Activated B cell treated with CpG ODN at 0.5 μM for 24 hours (primary cell): ENCODE measurements at regions of chr11 and their contacts with region 1.

Region 1: DNA sequence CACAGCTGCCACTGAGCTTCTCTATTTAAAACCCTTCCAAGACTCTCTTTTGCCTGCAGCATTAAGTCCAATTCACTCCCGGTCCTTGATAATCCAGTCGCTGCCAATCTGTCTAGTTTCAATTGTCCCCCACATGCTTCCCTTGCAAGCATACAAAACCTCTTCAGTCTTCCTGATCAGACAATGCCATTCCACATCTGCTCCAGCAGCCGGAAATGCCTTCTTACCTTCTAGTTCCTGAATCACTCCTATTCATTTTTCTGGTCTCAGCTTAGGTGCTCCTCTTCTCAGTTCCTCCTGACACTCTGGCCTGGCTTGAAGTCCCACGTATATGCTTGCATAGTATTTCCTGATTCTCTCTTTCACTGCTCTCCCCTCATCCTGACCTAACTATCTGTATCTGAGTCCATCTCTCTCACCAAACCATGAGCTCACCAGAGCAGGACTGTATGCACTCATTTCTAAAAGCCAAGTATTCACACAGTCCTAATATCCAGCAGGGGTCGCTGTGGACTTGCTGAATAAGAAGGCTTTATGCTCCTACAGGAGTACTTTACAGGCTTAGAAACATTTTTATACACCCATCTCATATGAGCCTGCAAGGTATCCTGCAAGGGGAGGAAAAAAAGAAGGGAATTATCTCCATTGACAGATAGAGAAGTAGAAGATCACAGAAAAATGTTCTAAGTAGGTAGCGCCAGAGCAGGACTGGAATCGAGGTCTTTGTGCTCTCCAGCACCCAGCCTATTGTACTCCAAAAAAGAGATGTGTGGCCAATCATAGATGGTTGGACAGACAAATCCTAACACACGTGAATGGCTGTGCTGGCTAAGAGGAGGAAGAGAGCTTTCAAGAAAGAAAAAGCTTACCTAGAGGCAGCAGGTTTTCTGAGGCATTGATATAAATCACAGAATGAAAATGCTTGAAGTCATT is 19.2 kb downstream of the XRRA1 start:
- DNase-seq: no peak
- ATAC-seq: peak; percentile 72
- H3K4me3 Mint-ChIP-seq: no peak overlapping the region
- H3K27ac Mint-ChIP-seq: no peak overlapping the region
- H3K4me1 Mint-ChIP-seq: no peaks in the 10 kb centered on the region
- H3K27me3 Mint-ChIP-seq: no peaks in the 10 kb centered on the region
- CTCF ChIP-seq: peak; percentile 65

Region 2: GRCh38 chr11:74543991-74544390 is 385.7 kb before region 1 on chr11:
- CTCF ChIA-PET with region 1: no interaction called
- POLR2A ChIA-PET with region 1: no interaction called
- intact Hi-C with region 1: no loop called
- DNase-seq: no peak
- ATAC-seq: no peak
- H3K4me3 Mint-ChIP-seq: no peak overlapping the region
- H3K27ac Mint-ChIP-seq: no peak overlapping the region
- H3K4me1 Mint-ChIP-seq: no peaks in the 10 kb centered on the region
- H3K27me3 Mint-ChIP-seq: no peaks in the 10 kb centered on the region
- CTCF ChIP-seq: no peak

Region 3: DNA sequence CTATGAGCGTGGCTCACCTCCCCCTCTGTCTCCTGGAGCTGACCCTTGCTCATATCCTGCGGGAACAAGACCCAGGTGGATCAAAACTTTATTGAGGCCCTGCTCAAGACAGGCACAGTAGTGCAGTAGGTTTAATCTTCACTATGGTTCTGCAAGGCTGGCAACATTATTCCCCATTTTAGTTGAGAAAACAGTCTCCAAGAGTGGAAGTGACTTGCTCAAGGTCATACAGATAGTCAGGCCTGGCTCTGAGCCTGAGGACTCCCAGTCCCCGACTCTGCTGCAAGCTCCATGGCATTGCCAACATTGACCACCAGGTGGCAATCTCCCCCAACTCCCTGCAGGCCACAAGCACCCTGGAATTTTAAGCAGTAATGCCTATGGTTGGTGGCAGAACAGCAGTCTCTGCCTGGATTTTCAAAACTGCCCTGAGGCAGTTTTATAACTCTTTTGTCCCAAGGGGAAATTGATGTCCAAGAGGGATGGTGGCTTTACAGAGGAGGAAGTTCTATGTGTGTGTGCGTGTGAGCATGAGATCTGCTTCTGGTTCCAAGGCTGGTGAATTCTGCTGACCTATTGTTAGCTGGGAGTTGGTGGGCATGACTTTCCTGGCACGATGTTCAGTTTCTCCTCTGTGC is 93.2 kb after region 1 on chr11:
- CTCF ChIA-PET with region 1: interaction called, 26 read pairs
- POLR2A ChIA-PET with region 1: no interaction called
- intact Hi-C with region 1: no loop called
- DNase-seq: peak; percentile 61
- ATAC-seq: peak; percentile 87
- H3K4me3 Mint-ChIP-seq: no peak overlapping the region
- H3K27ac Mint-ChIP-seq: no peak overlapping the region
- H3K4me1 Mint-ChIP-seq: no peaks in the 10 kb centered on the region
- H3K27me3 Mint-ChIP-seq: no peaks in the 10 kb centered on the region
- CTCF ChIP-seq: peak; percentile 73

Region 4: DNA sequence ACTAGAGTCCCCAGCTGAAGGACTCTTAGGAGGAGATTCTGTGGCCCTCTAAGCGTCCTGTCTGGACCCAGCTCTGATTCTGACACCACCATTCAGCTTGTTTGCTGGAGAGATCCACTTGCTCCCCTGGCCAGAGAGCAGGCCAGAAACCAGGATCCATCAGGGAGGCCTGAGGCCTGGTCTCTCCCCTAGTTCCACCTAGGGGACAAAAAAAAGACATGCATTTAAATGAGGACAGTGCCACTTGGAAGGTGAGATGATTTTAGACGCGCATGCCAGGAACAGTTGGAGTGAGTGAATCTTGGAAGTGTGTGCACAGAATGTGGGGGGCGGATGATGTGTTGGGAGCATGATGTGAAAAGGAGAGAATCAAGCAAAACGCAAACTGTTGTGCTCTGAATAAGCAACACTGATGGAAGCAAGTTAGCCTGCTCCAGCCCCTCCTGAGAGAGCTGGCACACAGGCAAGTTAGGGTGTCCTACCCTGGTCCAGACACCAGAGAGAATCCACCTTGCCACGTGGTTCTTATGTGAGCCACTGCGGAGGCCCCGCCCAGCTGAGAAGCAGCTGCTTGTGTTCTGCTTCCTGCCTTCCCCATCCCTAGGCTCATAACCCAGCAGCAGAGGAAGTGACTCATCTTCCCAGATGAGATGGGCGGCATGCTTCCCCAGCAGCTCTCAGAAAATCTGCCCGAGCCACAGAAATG is 213.2 kb after region 1 on chr11:
- CTCF ChIA-PET with region 1: interaction called, 14 read pairs
- POLR2A ChIA-PET with region 1: no interaction called
- intact Hi-C with region 1: loop called (anchors 2 kb)
- DNase-seq: no peak
- ATAC-seq: peak; percentile 67
- H3K4me3 Mint-ChIP-seq: peak overlapping the region; percentile 8
- H3K27ac Mint-ChIP-seq: no peak overlapping the region
- H3K4me1 Mint-ChIP-seq: peaks cover 21% of the 10 kb centered on the region
- H3K27me3 Mint-ChIP-seq: peaks cover 15% of the 10 kb centered on the region
- CTCF ChIP-seq: no peak

Region 5: DNA sequence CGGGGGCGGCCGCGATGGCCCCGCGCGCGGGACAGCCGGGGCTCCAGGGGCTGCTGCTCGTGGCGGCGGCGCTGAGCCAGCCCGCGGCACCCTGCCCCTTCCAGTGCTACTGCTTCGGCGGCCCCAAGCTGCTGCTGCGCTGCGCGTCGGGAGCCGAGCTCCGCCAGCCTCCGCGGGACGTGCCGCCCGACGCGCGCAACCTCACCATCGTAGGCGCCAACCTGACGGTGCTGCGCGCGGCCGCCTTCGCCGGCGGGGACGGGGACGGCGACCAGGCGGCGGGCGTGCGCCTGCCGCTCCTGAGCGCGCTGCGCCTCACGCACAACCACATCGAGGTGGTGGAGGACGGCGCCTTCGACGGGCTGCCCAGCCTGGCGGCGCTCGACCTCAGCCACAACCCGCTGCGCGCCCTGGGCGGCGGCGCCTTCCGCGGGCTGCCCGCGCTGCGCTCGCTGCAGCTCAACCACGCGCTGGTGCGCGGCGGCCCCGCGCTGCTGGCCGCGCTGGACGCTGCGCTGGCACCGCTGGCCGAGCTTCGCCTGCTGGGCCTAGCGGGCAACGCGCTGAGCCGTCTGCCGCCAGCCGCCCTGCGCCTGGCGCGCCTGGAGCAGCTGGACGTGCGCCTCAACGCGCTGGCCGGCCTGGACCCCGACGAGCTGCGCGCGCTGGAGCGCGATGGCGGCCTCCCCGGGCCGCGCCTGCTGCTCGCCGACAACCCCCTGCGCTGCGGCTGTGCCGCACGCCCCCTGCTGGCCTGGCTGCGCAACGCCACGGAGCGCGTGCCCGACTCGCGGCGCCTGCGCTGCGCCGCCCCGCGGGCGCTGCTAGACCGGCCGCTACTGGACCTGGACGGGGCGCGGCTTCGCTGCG is 311.6 kb after region 1 on chr11:
- CTCF ChIA-PET with region 1: interaction called, 16 read pairs
- POLR2A ChIA-PET with region 1: no interaction called
- intact Hi-C with region 1: no loop called
- DNase-seq: peak; percentile 86
- ATAC-seq: peak; percentile 97
- H3K4me3 Mint-ChIP-seq: peak overlapping the region; percentile 69
- H3K27ac Mint-ChIP-seq: no peak overlapping the region
- H3K4me1 Mint-ChIP-seq: peaks cover 10% of the 10 kb centered on the region
- H3K27me3 Mint-ChIP-seq: peaks cover 48% of the 10 kb centered on the region
- CTCF ChIP-seq: no peak

Region 6: GRCh38 chr11:75388386-75389275 is 458.9 kb after region 1 on chr11:
- CTCF ChIA-PET with region 1: no interaction called
- POLR2A ChIA-PET with region 1: no interaction called
- intact Hi-C with region 1: loop called (anchors 5 kb)
- DNase-seq: peak; percentile 33
- ATAC-seq: peak; percentile 92
- H3K4me3 Mint-ChIP-seq: no peak overlapping the region
- H3K27ac Mint-ChIP-seq: no peak overlapping the region
- H3K4me1 Mint-ChIP-seq: peaks cover 4% of the 10 kb centered on the region
- H3K27me3 Mint-ChIP-seq: peaks cover 16% of the 10 kb centered on the region
- CTCF ChIP-seq: no peak